A549 (cell line): ENCODE measurements at regions of chr17 and their contacts with region 1.

Region 1: DNA sequence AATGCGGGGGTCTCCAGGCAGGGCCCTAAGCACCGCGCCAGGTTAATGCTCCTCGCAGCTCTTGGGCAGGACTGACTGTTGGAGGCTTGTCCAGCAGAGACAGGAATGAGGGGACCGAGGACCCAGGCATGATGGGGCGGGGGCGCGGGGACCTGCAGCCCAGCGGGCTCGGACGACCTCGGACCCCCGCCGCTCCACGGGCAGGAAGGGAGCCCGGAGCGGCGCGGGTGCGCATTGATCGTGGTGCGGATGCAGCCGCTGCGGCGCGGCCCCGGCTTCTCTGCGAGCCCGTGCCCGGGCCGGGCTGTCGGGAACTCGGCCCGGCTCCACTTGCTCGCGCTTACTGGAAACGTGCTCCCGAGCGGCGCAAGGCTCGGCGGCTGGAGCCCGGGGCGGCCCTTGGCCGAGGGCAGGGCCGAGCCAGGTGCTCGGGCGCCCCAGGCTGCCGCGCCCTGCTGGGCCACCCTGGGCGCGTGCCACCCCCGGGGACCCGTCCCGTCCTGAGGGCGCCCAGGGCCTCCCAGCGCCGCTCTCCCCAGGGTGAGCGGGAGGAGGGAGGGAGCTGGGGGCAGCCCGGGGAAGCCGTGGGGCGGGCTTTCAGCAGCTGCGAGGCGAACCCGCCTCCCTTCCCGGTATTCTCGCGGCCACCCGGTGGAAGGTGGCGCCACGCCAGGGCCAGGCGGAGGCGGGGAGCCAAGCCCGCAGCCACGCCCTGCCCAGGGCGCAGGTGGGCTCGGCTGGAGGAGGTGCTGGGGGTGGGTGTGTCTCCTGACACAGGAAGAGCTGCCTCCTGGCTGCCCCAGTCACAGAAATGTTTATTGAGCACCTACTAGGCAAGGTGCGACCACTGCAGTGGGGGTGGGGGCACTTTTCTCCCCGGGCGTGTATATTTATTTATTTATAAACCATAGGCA is 45.9 kb downstream of the SOCS3 start:
- DNase-seq: peak; percentile 95 to 98
- ATAC-seq: peak; percentile 63 to 72
- H3K4me3 ChIP-seq: peak overlapping the region; percentile 42
- H3K27ac ChIP-seq: peak overlapping the region; percentile 94 to 95
- H3K4me1 ChIP-seq: peaks cover 57% of the 10 kb centered on the region
- CTCF ChIP-seq: no peak; the same call in 2 of the 3 replicates
- EP300 ChIP-seq: peak; percentile 31 to 57; a peak in 2 of 5 replicates
- POLR2A ChIP-seq: peak; percentile 64
- RAD21 ChIP-seq: peak in 1 of 2 experiments; percentile 50; a peak in 4 of 5 replicates

Region 2: DNA sequence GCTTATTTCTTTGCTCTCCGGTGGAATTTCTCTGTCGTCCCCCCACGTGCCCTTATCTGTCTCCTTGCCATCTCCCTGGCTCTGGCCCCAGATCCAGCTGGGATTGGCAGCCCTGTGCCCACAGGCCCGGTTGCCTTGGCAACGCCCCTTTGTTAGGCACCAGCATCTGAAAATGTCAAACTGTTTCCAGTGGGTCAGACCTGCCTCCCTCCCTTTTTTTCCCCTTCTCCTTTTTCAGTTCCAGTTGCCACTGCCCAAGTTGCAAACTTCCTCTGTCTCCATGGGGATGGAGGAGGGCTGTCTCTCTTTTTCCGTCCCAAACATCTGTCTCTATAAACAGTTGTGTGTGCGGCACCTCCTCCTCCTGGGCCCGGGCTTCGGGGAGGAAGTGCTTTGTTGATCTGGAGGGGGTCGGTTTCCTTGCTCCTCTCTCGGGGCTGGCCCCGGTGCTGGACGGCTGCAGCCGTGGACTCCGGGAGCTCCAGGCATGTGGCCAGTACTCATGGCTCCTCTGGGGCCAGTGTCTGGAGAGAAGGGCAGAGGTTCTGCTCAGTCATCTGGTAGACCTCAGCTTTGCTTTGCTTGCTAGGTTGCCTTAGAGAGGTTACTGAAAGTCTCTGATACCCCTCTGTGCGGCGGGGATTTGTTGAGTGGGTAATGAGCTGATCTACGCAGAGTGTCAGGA is 10.5 kb after region 1 on chr17:
- CTCF ChIA-PET with region 1: interaction called, 24 read pairs
- POLR2A ChIA-PET with region 1: interaction called, 4 read pairs
- DNase-seq: peak in 1 of 2 experiments; percentile 66
- ATAC-seq: peak; percentile 33 to 62; a peak in 5 of 6 replicates
- H3K4me3 ChIP-seq: no peak overlapping the region
- H3K27ac ChIP-seq: peak overlapping the region; percentile 47 to 79; a peak in 5 of 6 replicates
- H3K4me1 ChIP-seq: peaks cover 34% of the 10 kb centered on the region
- CTCF ChIP-seq: no peak
- EP300 ChIP-seq: no peak
- POLR2A ChIP-seq: no peak
- RAD21 ChIP-seq: no peak

Region 3: DNA sequence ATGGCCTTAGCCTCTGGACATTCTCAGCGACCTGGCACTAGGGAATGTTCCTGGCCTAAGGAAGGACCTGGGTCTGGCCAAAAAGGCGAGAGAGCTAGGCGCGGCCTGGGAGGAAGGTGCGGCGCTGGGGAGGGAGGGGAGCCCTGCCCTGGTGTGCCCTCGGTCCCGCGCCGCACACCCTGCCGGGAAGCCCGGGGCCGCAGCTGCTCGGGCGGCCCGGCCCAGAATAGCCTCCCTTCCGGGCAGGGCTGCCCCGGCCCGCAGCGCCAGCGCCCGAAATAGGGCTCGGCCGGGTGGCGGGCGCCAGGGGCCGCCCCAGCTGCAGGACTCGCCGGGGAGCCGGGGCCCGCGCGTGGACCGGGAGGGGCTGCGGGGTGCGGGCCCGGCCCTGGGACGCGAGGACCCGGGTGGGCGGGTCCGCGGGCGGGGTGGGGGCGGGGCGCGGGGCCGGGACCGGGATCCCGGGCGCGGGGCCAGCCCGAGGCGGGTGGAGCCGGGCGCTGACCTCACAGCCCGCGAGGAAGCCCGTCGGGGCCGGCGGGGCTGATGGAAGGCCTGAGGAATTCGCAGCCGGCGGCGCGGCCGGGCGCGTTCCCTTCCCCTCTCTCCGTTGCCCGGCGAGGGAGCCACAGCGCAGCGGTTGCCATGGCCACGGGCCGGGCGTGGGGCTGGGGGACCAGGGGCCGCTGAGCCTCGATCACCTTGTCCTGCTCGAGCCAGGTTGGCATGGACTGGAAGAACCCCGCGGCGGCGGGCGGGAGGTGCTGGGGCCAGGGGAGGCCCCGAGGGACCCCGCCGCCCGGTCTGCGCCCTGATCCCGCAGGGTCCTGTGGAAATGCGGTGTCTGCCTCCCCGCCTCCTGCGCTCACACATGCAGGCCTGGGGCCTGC is 27.8 kb after region 1 on chr17:
- CTCF ChIA-PET with region 1: interaction called, 49 read pairs
- POLR2A ChIA-PET with region 1: interaction called, 25 read pairs
- DNase-seq: peak; percentile 77 to 83
- ATAC-seq: peak; percentile 58 to 61
- H3K4me3 ChIP-seq: peak overlapping the region; percentile 53
- H3K27ac ChIP-seq: peak overlapping the region; percentile 91 to 97
- H3K4me1 ChIP-seq: peaks cover 74% of the 10 kb centered on the region
- CTCF ChIP-seq: no peak; the same call in 2 of the 3 replicates
- EP300 ChIP-seq: no peak
- POLR2A ChIP-seq: peak; percentile 22; the same call in 1 of the 2 replicates
- RAD21 ChIP-seq: peak in 1 of 2 experiments; percentile 10; a peak in 1 of 5 replicates